Calu3 (cell line): ENCODE measurements at regions of chr1 and their contacts with region 1.

Region 1: GRCh38 chr1:90616395-90616794 is 100.7 kb downstream of the BARHL2 start:
- DNase-seq: peak; percentile 28
- H3K4me3 Mint-ChIP-seq: no peak overlapping the region
- H3K27ac Mint-ChIP-seq: no peak overlapping the region
- H3K4me1 Mint-ChIP-seq: no peaks in the 10 kb centered on the region
- H3K27me3 Mint-ChIP-seq: no peaks in the 10 kb centered on the region
- CTCF ChIP-seq: peak; percentile 21

Region 2: DNA sequence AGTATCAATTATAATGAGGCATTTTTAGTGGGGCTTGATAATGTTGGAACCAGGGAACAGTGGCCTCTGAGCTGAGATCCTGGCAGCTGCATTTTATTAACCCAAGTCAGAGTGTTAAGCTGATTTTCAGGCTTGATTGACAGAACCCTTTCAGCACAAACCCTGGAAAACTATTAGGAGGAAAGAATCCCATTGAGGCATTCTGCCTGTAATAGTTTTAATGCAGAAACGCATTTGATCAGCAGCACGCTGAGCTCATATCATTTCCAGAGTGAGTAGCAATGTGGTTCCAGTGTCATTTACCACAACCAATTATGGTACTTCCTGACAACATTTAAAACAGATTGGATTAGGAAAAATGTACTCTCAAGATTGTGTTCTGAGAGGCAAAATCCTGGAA is 179.0 kb after region 1 on chr1:
- CTCF ChIA-PET with region 1: no interaction called
- intact Hi-C with region 1: loop called (anchors 10 kb)
- DNase-seq: no peak
- H3K4me3 Mint-ChIP-seq: no peak overlapping the region
- H3K27ac Mint-ChIP-seq: no peak overlapping the region
- H3K4me1 Mint-ChIP-seq: no peaks in the 10 kb centered on the region
- H3K27me3 Mint-ChIP-seq: peaks cover 81% of the 10 kb centered on the region
- CTCF ChIP-seq: no peak

Region 3: GRCh38 chr1:90943966-90944365 is 327.6 kb after region 1 on chr1:
- CTCF ChIA-PET with region 1: no interaction called
- intact Hi-C with region 1: no loop called
- DNase-seq: no peak
- H3K4me3 Mint-ChIP-seq: no peak overlapping the region
- H3K27ac Mint-ChIP-seq: no peak overlapping the region
- H3K4me1 Mint-ChIP-seq: no peaks in the 10 kb centered on the region
- H3K27me3 Mint-ChIP-seq: no peaks in the 10 kb centered on the region
- CTCF ChIP-seq: no peak